ENCODE measurements at regions of chr7 and their contacts with region 1.

Region 1: GRCh38 chr7:112550468-112551060 is 69.8 kb downstream of the LSMEM1 start:
- DNase-seq: peak in 3 of 5 donors; percentile 4 to 44 (median 40)
- H3K4me3 ChIP-seq: no peak overlapping the region
- H3K4me3 Mint-ChIP-seq: no peak overlapping the region
- H3K27ac ChIP-seq: no peak overlapping the region
- H3K27ac Mint-ChIP-seq: no peak overlapping the region
- H3K4me1 ChIP-seq: no peaks in the 10 kb centered on the region
- H3K4me1 Mint-ChIP-seq: no peaks in the 10 kb centered on the region
- H3K27me3 ChIP-seq: no peaks in the 10 kb centered on the region
- H3K27me3 Mint-ChIP-seq: peaks cover 3 to 22% of the 10 kb centered on the region in 2 donors

Region 2: DNA sequence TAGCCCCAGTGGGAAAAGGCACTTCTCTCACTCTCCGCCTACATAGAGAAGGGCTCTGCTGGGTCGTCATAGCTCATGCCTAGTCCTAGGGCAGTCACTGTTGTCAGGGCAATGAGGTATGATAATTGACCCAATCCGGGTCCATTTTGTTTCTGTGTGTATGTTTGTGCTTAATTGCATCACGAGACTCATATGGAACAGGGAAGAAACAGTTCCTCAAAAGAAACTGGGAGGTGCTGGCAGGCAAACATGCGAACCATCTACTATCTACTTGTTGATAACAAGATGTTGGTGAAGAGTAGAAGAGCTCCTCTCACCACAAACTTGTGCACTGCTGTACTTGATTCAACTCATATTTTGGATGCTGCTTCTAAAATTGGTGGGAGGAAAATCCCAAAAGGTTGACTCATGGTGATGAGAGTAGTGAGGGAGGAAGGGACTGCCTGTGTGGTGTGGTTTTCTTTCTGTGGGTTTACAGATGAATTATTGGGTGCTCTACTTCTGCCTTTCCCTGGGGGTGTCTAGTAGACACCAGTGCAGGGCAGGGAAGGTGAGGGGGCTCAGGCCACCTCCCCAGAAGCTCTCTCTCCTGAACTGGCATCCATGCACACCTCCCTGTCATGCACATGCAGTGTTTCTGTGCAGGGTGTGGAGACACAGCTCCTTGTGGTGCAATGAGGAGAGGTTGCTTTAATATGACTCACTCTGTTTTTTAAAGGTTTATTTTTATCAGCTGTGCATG is 40.4 kb before region 1 on chr7:
- CTCF ChIA-PET with region 1: no interaction called
- POLR2A ChIA-PET with region 1: no interaction called
- DNase-seq: no peak
- H3K4me3 ChIP-seq: no peak overlapping the region
- H3K4me3 Mint-ChIP-seq: no peak overlapping the region
- H3K27ac ChIP-seq: no peak overlapping the region
- H3K27ac Mint-ChIP-seq: no peak overlapping the region
- H3K4me1 ChIP-seq: no peaks in the 10 kb centered on the region
- H3K4me1 Mint-ChIP-seq: no peaks in the 10 kb centered on the region
- H3K27me3 ChIP-seq: no peaks in the 10 kb centered on the region
- H3K27me3 Mint-ChIP-seq: peaks cover 7 to 17% of the 10 kb centered on the region in 2 donors

Region 3: DNA sequence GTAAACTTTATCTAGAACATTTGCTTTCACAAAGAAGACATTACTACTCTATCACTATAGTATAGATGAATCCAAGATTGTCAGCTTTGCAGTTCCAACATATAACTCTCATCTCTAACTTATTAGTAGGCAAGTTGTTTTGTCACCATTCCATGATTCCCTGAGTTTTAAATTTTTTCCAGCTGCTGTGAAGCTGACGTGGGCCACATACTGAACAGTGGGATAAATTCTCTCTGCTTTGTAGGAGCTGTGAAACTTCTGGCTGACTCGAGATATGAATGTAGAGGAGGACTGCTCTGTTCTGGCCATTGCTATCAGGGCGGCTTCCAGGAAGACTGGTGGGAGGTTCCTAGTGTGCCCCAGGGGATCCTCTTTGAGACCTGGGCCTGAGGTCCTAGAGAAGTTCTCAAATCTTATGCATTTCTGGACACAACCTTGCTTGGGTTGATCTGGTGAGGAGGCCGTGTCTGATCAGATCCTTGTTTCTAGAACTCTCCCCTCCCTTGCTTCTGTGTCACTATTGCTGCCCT is 11.8 kb before region 1 on chr7:
- CTCF ChIA-PET with region 1: no interaction called
- POLR2A ChIA-PET with region 1: no interaction called
- DNase-seq: no peak
- H3K4me3 ChIP-seq: no peak overlapping the region
- H3K4me3 Mint-ChIP-seq: no peak overlapping the region
- H3K27ac ChIP-seq: no peak overlapping the region
- H3K27ac Mint-ChIP-seq: no peak overlapping the region
- H3K4me1 ChIP-seq: no peaks in the 10 kb centered on the region
- H3K4me1 Mint-ChIP-seq: no peaks in the 10 kb centered on the region
- H3K27me3 ChIP-seq: no peaks in the 10 kb centered on the region
- H3K27me3 Mint-ChIP-seq: peaks cover 9 to 17% of the 10 kb centered on the region in 2 donors

Region 4: GRCh38 chr7:113421696-113422330 is 871.2 kb after region 1 on chr7:
- CTCF ChIA-PET with region 1: interaction called, 17 read pairs
- POLR2A ChIA-PET with region 1: no interaction called
- DNase-seq: peak; percentile 45 to 72 (median 53)
- H3K4me3 ChIP-seq: no peak overlapping the region
- H3K4me3 Mint-ChIP-seq: peak overlapping the region in 6 of 7 donors; percentile 24 to 49 (median 30)
- H3K27ac ChIP-seq: no peak overlapping the region
- H3K27ac Mint-ChIP-seq: peak overlapping the region in 4 of 8 donors; percentile 43 to 79 (median 64)
- H3K4me1 ChIP-seq: no peaks in the 10 kb centered on the region
- H3K4me1 Mint-ChIP-seq: peaks cover 3 to 4% (median 3%) of the 10 kb centered on the region in 3 donors
- H3K27me3 ChIP-seq: no peaks in the 10 kb centered on the region
- H3K27me3 Mint-ChIP-seq: no peaks in the 10 kb centered on the region